ENCODE measurements at regions of chr2 and their contacts with region 1.

Region 1: GRCh38 chr2:127743477-127744026 is 42.3 kb downstream of the SFT2D3 start:
- DNase-seq: no peak
- H3K4me3 ChIP-seq: no peak overlapping the region
- H3K27ac ChIP-seq: no peak overlapping the region
- H3K4me1 ChIP-seq: no peaks in the 10 kb centered on the region
- H3K27me3 ChIP-seq: no peaks in the 10 kb centered on the region
- CTCF ChIP-seq: no peak

Region 2: DNA sequence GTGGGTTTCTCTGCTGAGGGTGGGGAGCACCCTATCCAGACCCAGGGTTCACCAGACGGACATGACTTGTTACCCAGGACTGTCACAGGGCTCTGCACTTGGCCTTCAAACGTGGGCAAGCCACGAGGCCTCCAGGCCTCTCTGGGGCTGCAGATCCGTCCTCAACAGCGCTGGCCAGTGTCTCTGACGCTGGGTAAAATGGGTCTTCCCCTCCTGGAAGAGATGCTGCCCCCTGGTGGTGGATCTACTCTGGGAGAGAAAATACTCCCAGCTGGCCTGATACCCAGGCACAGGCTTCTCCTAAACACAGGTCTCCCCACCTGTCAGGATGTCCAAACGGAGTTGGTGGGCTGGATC is 93.9 kb before region 1 on chr2:
- CTCF ChIA-PET with region 1: no interaction called
- dilution Hi-C with region 1: no loop called
- in situ Hi-C with region 1: no loop called
- intact Hi-C with region 1: no loop called
- DNase-seq: peak; percentile 64
- H3K4me3 ChIP-seq: no peak overlapping the region
- H3K27ac ChIP-seq: no peak overlapping the region
- H3K4me1 ChIP-seq: peaks cover 4% of the 10 kb centered on the region
- H3K27me3 ChIP-seq: no peaks in the 10 kb centered on the region
- CTCF ChIP-seq: peak; percentile 82 to 90

Region 3: GRCh38 chr2:129656081-129656598 is 1912.6 kb after region 1 on chr2:
- CTCF ChIA-PET with region 1: interaction called, 17 read pairs
- dilution Hi-C with region 1: no loop called
- in situ Hi-C with region 1: no loop called
- intact Hi-C with region 1: no loop called
- DNase-seq: no peak
- H3K4me3 ChIP-seq: no peak overlapping the region
- H3K27ac ChIP-seq: no peak overlapping the region
- H3K4me1 ChIP-seq: no peaks in the 10 kb centered on the region
- H3K27me3 ChIP-seq: no peaks in the 10 kb centered on the region
- CTCF ChIP-seq: no peak